ENCODE measurements at regions of chr7 and their contacts with region 1.

Region 1: GRCh38 chr7:100428967-100429636 is 529 bp upstream of the MEPCE start:
- DNase-seq: peak; percentile 100
- H3K4me3 ChIP-seq: peak overlapping the region; percentile 83 to 95
- H3K4me3 Mint-ChIP-seq: peak overlapping the region; percentile 91 to 100 (median 99)
- H3K27ac ChIP-seq: peak overlapping the region; percentile 100
- H3K27ac Mint-ChIP-seq: peak overlapping the region; percentile 99 to 100 (median 100)
- H3K4me1 ChIP-seq: peaks cover 41% of the 10 kb centered on the region
- H3K4me1 Mint-ChIP-seq: peaks cover 18 to 62% (median 36%) of the 10 kb centered on the region in 4 donors
- H3K27me3 ChIP-seq: no peaks in the 10 kb centered on the region
- H3K27me3 Mint-ChIP-seq: peaks cover 0 to 5% of the 10 kb centered on the region in 2 donors

Region 2: GRCh38 chr7:98598846-98599615 is 1830.1 kb before region 1 on chr7:
- CTCF ChIA-PET with region 1: no interaction called
- POLR2A ChIA-PET with region 1: no interaction called
- intact Hi-C with region 1: no loop called
- DNase-seq: no peak
- H3K4me3 ChIP-seq: no peak overlapping the region
- H3K4me3 Mint-ChIP-seq: no peak overlapping the region
- H3K27ac ChIP-seq: no peak overlapping the region
- H3K27ac Mint-ChIP-seq: no peak overlapping the region
- H3K4me1 ChIP-seq: no peaks in the 10 kb centered on the region
- H3K4me1 Mint-ChIP-seq: no peaks in the 10 kb centered on the region
- H3K27me3 ChIP-seq: no peaks in the 10 kb centered on the region
- H3K27me3 Mint-ChIP-seq: peaks cover 0 to 6% of the 10 kb centered on the region in 2 donors

Region 3: DNA sequence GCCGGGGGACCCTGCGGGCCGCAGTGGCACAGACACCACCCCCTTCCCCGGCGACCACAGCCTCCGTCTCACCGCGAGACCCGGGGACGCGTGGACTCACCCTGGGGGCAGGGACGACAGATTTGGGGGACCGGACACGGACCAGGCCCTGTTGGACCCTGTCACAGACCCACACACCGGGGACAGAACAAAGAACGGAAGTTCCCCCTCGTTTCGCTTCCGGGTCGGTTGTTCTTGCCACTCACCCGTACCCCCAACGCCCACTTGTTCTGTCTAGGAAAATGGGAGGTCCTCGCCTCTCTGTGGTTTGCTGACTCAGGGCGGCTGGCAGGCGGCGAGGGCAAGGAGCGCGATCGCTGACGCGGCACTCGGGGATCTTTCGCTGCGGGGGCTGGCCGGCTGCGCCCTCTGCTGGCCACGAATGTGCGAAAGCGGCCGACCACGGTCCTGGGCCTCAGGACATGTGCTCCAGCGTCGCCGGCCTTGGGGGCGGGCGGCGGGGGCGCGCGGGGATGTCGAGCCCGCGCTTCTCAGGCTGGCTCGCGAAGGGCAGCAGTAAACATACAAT is 347.5 kb before region 1 on chr7 and contains the start of gene ZNF3:
- CTCF ChIA-PET with region 1: no interaction called
- POLR2A ChIA-PET with region 1: no interaction called
- intact Hi-C with region 1: loop called (anchors 5 kb)
- DNase-seq: peak; percentile 98 to 99 (median 98)
- H3K4me3 ChIP-seq: peak within 1 kb of the TSS; percentile 87 to 88
- H3K4me3 Mint-ChIP-seq: peak within 1 kb of the TSS; percentile 85 to 97 (median 94)
- H3K27ac ChIP-seq: peak within 1 kb of the TSS; percentile 74
- H3K27ac Mint-ChIP-seq: peak within 1 kb of the TSS; percentile 90 to 99 (median 95)
- H3K4me1 ChIP-seq: peaks cover 25% of the 10 kb centered on the region
- H3K4me1 Mint-ChIP-seq: peaks cover 23 to 48% (median 36%) of the 10 kb centered on the region in 4 donors
- H3K27me3 ChIP-seq: no peaks in the 10 kb centered on the region
- H3K27me3 Mint-ChIP-seq: no peaks in the 10 kb centered on the region
- total RNA-seq, gene ZNF3: 44.2 to 44.8 TPM

Region 4: DNA sequence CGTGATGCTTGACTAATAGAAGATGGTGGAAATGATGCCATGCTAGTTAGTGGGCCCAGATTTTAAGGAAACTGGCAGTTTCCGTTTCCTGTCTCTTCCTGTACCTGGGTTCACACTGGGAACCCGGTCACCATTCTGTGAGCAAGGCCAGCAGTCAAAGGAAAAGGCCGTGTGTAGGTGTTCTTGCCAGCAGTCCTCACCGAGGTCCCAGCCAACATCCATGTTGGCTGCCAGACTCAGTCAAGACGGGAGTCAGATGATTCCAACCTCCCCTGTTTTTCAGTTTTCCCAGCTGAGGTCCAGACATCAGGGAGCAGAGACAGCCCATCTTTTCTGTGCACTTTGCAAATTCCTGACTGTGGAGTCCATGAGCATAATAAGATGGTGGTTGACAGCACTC is 86.3 kb before region 1 on chr7:
- CTCF ChIA-PET with region 1: no interaction called
- POLR2A ChIA-PET with region 1: interaction called, 11 read pairs
- intact Hi-C with region 1: loop called (anchors 2 kb)
- DNase-seq: no peak
- H3K4me3 ChIP-seq: no peak overlapping the region
- H3K4me3 Mint-ChIP-seq: peak overlapping the region in 1 of 8 donors; percentile 43
- H3K27ac ChIP-seq: no peak overlapping the region
- H3K27ac Mint-ChIP-seq: peak overlapping the region; percentile 83 to 92 (median 87)
- H3K4me1 ChIP-seq: peaks cover 21% of the 10 kb centered on the region
- H3K4me1 Mint-ChIP-seq: peaks cover 14 to 34% (median 19%) of the 10 kb centered on the region in 4 donors
- H3K27me3 ChIP-seq: no peaks in the 10 kb centered on the region
- H3K27me3 Mint-ChIP-seq: no peaks in the 10 kb centered on the region

Region 5: GRCh38 chr7:100456558-100456957 is 27.5 kb after region 1 on chr7:
- CTCF ChIA-PET with region 1: no interaction called
- POLR2A ChIA-PET with region 1: interaction called, 33 read pairs
- intact Hi-C with region 1: no loop called
- DNase-seq: no peak
- H3K4me3 ChIP-seq: no peak overlapping the region
- H3K4me3 Mint-ChIP-seq: no peak overlapping the region
- H3K27ac ChIP-seq: no peak overlapping the region
- H3K27ac Mint-ChIP-seq: no peak overlapping the region
- H3K4me1 ChIP-seq: peaks cover 4% of the 10 kb centered on the region
- H3K4me1 Mint-ChIP-seq: peaks cover 5 to 15% (median 6%) of the 10 kb centered on the region in 4 donors
- H3K27me3 ChIP-seq: no peaks in the 10 kb centered on the region
- H3K27me3 Mint-ChIP-seq: no peaks in the 10 kb centered on the region

Region 6: DNA sequence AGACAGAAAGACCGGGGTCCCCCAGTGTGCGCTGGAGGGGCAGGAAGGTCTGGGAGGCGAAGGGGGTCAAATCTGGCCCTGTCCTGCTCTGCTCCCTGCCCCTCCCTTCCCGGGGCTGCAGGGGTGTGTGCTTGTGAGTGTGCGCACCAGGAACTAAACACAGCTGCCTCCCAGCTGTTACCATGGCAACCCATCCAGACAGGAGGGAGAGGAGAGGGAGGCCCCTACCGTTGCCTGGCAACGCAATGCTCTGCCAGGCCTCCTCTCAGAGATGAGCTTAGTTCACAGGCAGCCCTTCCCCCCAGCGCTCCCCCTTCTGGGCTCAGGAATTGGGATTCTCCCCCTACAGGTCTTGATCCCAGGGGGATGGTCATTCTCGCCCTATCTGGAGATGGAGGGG is 60.7 kb after region 1 on chr7:
- CTCF ChIA-PET with region 1: no interaction called
- POLR2A ChIA-PET with region 1: no interaction called
- intact Hi-C with region 1: no loop called
- DNase-seq: peak; percentile 45 to 67 (median 59)
- H3K4me3 ChIP-seq: no peak overlapping the region
- H3K4me3 Mint-ChIP-seq: no peak overlapping the region
- H3K27ac ChIP-seq: no peak overlapping the region
- H3K27ac Mint-ChIP-seq: peak overlapping the region in 4 of 7 donors; percentile 31 to 73 (median 40)
- H3K4me1 ChIP-seq: peaks cover 12% of the 10 kb centered on the region
- H3K4me1 Mint-ChIP-seq: peaks cover 5 to 30% (median 16%) of the 10 kb centered on the region in 4 donors
- H3K27me3 ChIP-seq: no peaks in the 10 kb centered on the region
- H3K27me3 Mint-ChIP-seq: no peaks in the 10 kb centered on the region

Region 7: GRCh38 chr7:100586266-100587025 is 157.3 kb after region 1 on chr7 and contains the start of gene FBXO24:
- CTCF ChIA-PET with region 1: no interaction called
- POLR2A ChIA-PET with region 1: interaction called, 80 read pairs
- intact Hi-C with region 1: loop called (anchors 1 kb)
- DNase-seq: peak; percentile 99 to 100 (median 100)
- H3K4me3 ChIP-seq: peak within 1 kb of the TSS; percentile 77 to 98
- H3K4me3 Mint-ChIP-seq: peak within 1 kb of the TSS; percentile 92 to 99 (median 97)
- H3K27ac ChIP-seq: peak within 1 kb of the TSS; percentile 79
- H3K27ac Mint-ChIP-seq: peak within 1 kb of the TSS; percentile 86 to 99 (median 97)
- H3K4me1 ChIP-seq: peaks cover 38% of the 10 kb centered on the region
- H3K4me1 Mint-ChIP-seq: peaks cover 11 to 27% (median 16%) of the 10 kb centered on the region in 4 donors
- H3K27me3 ChIP-seq: no peaks in the 10 kb centered on the region
- H3K27me3 Mint-ChIP-seq: peaks cover 0 to 2% of the 10 kb centered on the region in 2 donors
- total RNA-seq, gene FBXO24: 1.6 to 2.1 TPM

Region 8: DNA sequence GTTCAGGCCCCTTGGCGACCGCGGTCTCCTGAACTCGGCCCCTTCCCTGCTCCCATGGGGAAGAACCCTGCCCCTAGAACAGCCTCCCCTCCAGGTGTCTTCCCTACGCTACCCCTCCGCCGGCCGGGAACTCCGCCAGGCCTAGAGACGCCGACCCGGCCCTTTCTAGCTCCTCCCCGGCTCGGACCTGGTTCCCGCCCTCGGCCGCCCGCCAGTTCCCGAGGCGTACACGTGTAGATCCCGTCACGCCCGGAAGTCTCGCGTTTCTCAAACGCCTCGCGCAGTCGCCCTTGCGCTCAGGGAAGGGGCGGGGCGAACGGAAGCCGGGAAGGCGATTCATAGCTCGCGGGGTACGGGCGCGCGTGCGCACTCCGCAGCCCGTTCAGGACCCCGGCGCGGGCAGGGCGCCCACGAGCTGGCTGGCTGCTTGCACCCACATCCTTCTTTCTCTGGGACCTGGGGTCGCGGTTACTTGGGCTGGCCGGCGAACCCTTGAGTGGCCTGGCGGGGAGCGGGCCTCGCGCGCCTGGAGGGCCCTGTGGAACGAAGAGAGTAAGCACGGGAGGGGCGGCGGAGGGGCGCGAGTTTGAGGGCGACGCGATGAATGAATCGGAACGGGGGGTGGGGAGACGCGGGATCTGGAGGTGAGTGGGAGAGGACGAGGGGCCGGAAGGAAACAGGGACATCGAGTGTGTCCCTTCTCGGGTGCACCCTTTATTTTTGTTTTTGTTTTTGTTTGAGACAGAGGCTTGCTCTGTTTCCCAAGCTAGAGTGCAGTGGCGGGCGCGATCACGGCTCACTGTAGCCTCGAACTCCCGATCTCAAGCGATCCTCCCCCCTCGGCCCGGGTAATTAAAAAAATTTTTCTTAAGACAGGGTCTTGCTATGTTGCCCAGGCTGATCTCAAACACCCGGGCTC is 276.9 kb after region 1 on chr7 and contains the start of gene POP7:
- CTCF ChIA-PET with region 1: interaction called, 5 read pairs
- POLR2A ChIA-PET with region 1: interaction called, 16 read pairs
- intact Hi-C with region 1: no loop called
- DNase-seq: peak; percentile 96 to 97 (median 97)
- H3K4me3 ChIP-seq: peak within 1 kb of the TSS; percentile 89 to 90
- H3K4me3 Mint-ChIP-seq: peak within 1 kb of the TSS; percentile 93 to 100 (median 96)
- H3K27ac ChIP-seq: peak within 1 kb of the TSS; percentile 79
- H3K27ac Mint-ChIP-seq: peak within 1 kb of the TSS; percentile 90 to 98 (median 96)
- H3K4me1 ChIP-seq: peaks cover 16% of the 10 kb centered on the region
- H3K4me1 Mint-ChIP-seq: peaks cover 5 to 18% (median 11%) of the 10 kb centered on the region in 4 donors
- H3K27me3 ChIP-seq: no peaks in the 10 kb centered on the region
- H3K27me3 Mint-ChIP-seq: peaks cover 2 to 3% of the 10 kb centered on the region in 2 donors
- total RNA-seq, gene POP7: 14.6 to 16.0 TPM

Measured in CD4-positive, alpha-beta memory T cell (primary cell).